OCI-LY7 (cell line): ENCODE measurements at regions of chr5 and their contacts with region 1.

Region 1: GRCh38 chr5:138464008-138464387 is 1.3 kb upstream of the EGR1 start:
- DNase-seq: peak; percentile 95
- H3K4me3 ChIP-seq: peak overlapping the region; percentile 74
- H3K27ac ChIP-seq: peak overlapping the region; percentile 76
- H3K4me1 ChIP-seq: peaks cover 34% of the 10 kb centered on the region
- CTCF ChIP-seq: peak; percentile 85

Region 2: GRCh38 chr5:138491669-138492559 is 27.9 kb after region 1 on chr5:
- CTCF ChIA-PET with region 1: no interaction called
- POLR2A ChIA-PET with region 1: no interaction called
- intact Hi-C with region 1: loop called (anchors 1 kb)
- DNase-seq: peak; percentile 88
- H3K4me3 ChIP-seq: peak overlapping the region; percentile 68
- H3K27ac ChIP-seq: no peak overlapping the region
- H3K4me1 ChIP-seq: peaks cover 26% of the 10 kb centered on the region
- CTCF ChIP-seq: no peak

Region 3: GRCh38 chr5:138503487-138504270 is 39.7 kb after region 1 on chr5:
- CTCF ChIA-PET with region 1: interaction called, 3 read pairs
- POLR2A ChIA-PET with region 1: no interaction called
- intact Hi-C with region 1: loop called (anchors 1 kb)
- DNase-seq: peak; percentile 68
- H3K4me3 ChIP-seq: no peak overlapping the region
- H3K27ac ChIP-seq: no peak overlapping the region
- H3K4me1 ChIP-seq: no peaks in the 10 kb centered on the region
- CTCF ChIP-seq: peak; percentile 87